ENCODE measurements at regions of chr12 and their contacts with region 1.

Region 1: GRCh38 chr12:751192-751998 is 984 bp upstream of the WNK1 start:
- DNase-seq: peak; percentile 94
- H3K4me3 Mint-ChIP-seq: no peak overlapping the region
- H3K27ac Mint-ChIP-seq: no peak overlapping the region
- H3K4me1 Mint-ChIP-seq: peaks cover 11% of the 10 kb centered on the region
- H3K27me3 Mint-ChIP-seq: no peaks in the 10 kb centered on the region
- CTCF ChIP-seq: peak; percentile 74

Region 2: GRCh38 chr12:288687-289086 is 462.7 kb before region 1 on chr12:
- CTCF ChIA-PET with region 1: no interaction called
- intact Hi-C with region 1: no loop called
- DNase-seq: no peak
- H3K4me3 Mint-ChIP-seq: no peak overlapping the region
- H3K27ac Mint-ChIP-seq: no peak overlapping the region
- H3K4me1 Mint-ChIP-seq: no peaks in the 10 kb centered on the region
- H3K27me3 Mint-ChIP-seq: no peaks in the 10 kb centered on the region
- CTCF ChIP-seq: no peak

Region 3: DNA sequence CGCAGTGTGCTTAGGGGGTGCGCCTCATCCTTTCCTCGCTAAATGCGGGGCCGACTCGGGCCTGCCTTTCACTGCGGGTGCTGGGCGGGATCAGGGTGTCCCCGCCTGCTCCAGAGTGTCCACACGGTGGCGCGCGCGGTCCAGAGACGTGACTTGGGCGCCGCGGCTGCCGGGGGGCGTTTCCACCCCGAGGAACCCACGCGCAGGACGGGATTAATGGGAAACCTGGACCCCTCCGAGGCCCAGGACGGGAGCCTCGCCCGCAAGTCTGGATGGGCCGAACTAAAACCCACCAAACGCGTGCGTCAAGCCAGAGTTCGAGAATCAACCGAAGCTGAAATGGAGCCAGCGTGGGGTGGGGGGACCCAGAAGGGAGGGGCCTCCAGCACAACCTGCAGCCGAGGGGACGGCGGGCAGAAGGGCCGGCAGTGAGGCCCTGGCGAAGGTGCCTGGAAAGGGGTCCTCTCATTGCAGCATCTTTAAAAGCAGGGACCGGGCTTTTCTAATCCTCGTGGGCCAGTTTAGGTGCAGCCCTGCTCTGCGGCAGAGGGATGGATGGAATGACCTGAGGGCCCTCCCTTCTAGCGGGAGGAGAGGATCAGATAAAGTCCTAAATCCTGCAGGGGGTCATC is 181.5 kb before region 1 on chr12:
- CTCF ChIA-PET with region 1: interaction called, 25 read pairs
- intact Hi-C with region 1: no loop called
- DNase-seq: peak; percentile 91
- H3K4me3 Mint-ChIP-seq: peak overlapping the region; percentile 80
- H3K27ac Mint-ChIP-seq: no peak overlapping the region
- H3K4me1 Mint-ChIP-seq: peaks cover 17% of the 10 kb centered on the region
- H3K27me3 Mint-ChIP-seq: peaks cover 17% of the 10 kb centered on the region
- CTCF ChIP-seq: peak; percentile 92

Region 4: DNA sequence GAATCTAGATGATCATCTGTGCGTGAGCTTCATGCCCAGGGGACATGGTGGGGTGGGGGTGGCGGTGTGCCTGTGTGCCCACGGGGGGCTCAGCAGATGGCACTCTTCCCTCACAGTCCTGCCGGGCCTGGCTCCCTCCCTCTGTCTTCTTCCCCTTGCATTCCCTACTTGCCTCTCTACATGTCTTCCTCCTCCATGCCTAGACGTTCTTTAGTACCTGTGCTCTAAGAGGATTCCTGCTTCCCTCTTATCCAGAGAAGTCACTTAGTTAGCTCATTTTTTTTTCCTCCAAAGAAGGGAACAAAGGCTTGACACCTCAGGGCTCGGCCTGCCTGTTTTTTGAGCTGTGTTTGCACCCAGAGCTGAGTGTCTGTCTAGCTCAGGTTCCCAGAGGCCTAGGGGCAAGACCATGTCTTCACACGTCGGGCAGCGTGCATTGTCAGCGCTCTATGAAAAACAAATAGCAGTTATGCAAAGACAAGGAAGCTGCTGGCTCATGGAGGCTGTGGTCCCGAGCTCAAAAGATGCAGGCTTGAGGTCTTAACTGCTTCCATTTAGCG is 136.9 kb before region 1 on chr12:
- CTCF ChIA-PET with region 1: interaction called, 15 read pairs
- intact Hi-C with region 1: no loop called
- DNase-seq: peak; percentile 36
- H3K4me3 Mint-ChIP-seq: no peak overlapping the region
- H3K27ac Mint-ChIP-seq: no peak overlapping the region
- H3K4me1 Mint-ChIP-seq: no peaks in the 10 kb centered on the region
- H3K27me3 Mint-ChIP-seq: peaks cover 27% of the 10 kb centered on the region
- CTCF ChIP-seq: no peak

Region 5: DNA sequence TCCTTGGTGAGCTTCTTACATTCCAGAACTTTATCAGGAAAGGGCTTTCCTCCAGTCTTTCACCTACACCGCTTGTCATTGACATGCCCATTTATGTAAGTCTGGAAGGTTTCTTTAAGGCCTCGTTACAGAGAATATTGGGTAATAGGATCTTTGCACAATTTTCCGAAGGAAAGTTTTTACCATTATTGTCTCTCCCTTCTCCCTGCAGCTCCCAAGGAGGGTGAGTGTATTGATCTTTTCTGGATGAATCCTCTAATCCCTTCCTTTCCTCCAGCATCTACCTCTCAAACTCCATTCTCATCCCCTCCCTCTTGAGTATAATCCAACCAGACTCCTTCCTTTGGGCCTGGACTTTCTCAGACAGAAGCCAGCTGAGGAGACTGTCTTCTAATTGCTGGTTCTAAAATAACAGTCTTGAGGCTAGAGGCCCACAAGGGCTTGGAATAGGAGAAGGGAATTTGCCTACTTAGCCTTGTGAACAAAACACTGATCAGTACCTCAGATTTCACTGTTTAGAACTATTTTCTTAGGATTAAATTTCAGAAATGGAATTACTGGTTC is 22.7 kb after region 1 on chr12:
- CTCF ChIA-PET with region 1: interaction called, 21 read pairs
- intact Hi-C with region 1: loop called (anchors 2 kb)
- DNase-seq: no peak
- H3K4me3 Mint-ChIP-seq: no peak overlapping the region
- H3K27ac Mint-ChIP-seq: no peak overlapping the region
- H3K4me1 Mint-ChIP-seq: peaks cover 50% of the 10 kb centered on the region
- H3K27me3 Mint-ChIP-seq: no peaks in the 10 kb centered on the region
- CTCF ChIP-seq: no peak

Region 6: DNA sequence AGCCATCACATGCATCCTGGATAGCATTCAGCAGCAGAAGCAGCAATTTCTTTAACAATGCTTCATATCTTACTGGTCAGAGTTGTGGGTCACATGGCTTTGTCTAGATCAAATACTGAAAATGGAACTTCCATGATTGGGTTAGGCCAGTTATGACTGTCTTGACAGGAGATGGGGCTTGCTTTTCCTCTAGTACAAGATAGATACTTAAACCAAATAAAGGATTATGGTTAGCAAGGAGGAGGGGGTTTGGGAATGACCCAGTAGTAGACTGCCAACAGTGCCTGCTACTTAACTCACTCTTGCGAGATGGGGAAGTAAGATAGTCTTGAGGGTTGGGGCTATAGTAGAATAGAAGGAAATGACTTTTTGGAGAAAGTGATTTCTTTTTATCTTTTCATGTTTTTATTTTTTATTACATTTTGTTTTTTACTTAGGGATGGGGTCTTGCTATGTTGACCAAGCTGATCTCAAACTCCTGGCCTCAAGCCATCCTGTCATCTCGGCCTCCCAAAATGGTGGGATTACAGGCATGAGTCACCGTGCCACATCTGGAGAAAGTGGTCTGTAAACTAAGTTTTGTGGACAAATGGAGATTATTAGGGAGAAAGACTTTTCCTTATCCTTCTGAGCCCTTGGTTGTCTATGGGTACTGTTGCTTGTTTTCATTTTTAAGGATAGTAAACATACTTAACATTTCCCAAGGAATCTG is 38.6 kb after region 1 on chr12:
- CTCF ChIA-PET with region 1: interaction called, 3 read pairs
- intact Hi-C with region 1: loop called (anchors 5 kb)
- DNase-seq: no peak
- H3K4me3 Mint-ChIP-seq: no peak overlapping the region
- H3K27ac Mint-ChIP-seq: no peak overlapping the region
- H3K4me1 Mint-ChIP-seq: peaks cover 34% of the 10 kb centered on the region
- H3K27me3 Mint-ChIP-seq: no peaks in the 10 kb centered on the region
- CTCF ChIP-seq: no peak

Region 7: DNA sequence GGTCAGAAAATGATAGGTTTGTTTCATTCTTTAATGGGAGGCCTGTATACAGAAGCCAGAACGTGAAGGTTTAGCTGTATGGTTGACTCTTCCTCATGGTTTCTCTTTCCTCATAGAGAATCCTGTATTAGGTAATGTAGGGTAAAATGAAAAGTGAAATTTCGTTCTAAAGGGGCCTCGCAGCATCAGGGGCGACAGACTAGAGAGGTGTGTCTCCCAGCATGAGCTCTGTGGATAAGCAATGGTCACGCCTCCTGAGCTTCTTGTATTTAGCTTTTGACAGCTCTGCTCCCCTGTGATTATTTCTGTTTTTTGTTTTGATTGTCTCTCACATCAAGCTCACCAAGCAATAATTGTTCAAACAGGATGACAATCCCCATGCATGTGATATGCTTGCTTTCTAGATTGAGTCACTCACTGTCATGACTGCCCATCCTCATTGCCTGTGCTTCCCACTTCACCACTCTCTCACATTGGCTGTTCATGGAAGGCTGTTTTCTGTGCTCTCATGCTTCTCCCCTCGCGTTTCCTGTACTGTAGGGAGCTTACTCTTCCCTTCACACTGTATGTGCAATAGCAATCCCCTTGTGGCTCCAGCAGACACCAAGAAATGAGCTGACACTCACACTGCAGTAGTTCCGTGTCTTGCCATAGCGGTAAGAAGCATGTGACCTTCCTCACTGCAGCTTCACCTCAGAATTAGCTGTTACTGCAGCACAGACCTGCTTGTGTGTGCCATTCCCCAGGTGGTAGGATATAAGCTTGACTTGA is 154.1 kb after region 1 on chr12:
- CTCF ChIA-PET with region 1: no interaction called
- intact Hi-C with region 1: no loop called
- DNase-seq: no peak
- H3K4me3 Mint-ChIP-seq: no peak overlapping the region
- H3K27ac Mint-ChIP-seq: peak overlapping the region; percentile 10
- H3K4me1 Mint-ChIP-seq: peaks cover 8% of the 10 kb centered on the region
- H3K27me3 Mint-ChIP-seq: no peaks in the 10 kb centered on the region
- CTCF ChIP-seq: no peak

Region 8: DNA sequence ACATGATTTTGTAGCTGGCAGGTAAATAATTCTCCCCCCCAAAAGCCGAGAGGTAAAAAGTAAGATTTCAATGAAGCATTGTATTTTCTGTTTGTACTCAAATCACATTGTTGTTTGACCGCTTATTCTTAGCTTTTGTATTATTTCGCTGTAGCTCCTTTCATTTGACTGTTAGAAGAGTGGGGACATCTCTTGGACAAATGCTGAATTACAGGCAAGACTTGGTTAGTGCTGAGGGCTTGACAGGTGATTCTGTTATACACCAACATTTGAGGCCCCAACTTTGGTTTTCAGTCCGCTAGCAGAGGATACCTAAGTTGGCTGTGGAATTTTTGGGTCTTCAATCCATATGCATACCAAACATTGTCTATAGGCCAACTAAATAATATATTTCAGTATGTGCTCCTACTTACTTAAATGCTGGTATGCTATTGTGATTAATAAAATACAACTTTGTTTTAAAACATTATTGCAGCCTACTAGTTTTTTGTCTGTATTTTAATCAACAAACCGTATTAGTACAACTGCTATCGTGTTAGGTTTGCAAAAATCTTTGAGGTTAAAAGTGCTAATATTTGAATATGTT is 341.9 kb after region 1 on chr12:
- CTCF ChIA-PET with region 1: no interaction called
- intact Hi-C with region 1: no loop called
- DNase-seq: peak; percentile 52
- H3K4me3 Mint-ChIP-seq: no peak overlapping the region
- H3K27ac Mint-ChIP-seq: no peak overlapping the region
- H3K4me1 Mint-ChIP-seq: peaks cover 12% of the 10 kb centered on the region
- H3K27me3 Mint-ChIP-seq: no peaks in the 10 kb centered on the region
- CTCF ChIP-seq: peak; percentile 45